Activated naive CD4-positive, alpha-beta T cell treated with anti-CD3 and anti-CD28 coated beads for 36 hours (primary cell): ENCODE measurements at regions of chr17 and their contacts with region 1.

Region 1: GRCh38 chr17:29124117-29124924 is 55.9 kb downstream of the MYO18A start:
- DNase-seq: peak; percentile 68
- H3K4me3 Mint-ChIP-seq: no peak overlapping the region
- H3K27ac Mint-ChIP-seq: no peak overlapping the region
- H3K4me1 Mint-ChIP-seq: peaks cover 2% of the 10 kb centered on the region
- H3K27me3 Mint-ChIP-seq: no peaks in the 10 kb centered on the region

Region 2: GRCh38 chr17:29140051-29140621 is 15.8 kb after region 1 on chr17:
- CTCF ChIA-PET with region 1: interaction called, 120 read pairs
- intact Hi-C with region 1: loop called (anchors 1 kb)
- DNase-seq: peak; percentile 89
- H3K4me3 Mint-ChIP-seq: peak overlapping the region; percentile 83
- H3K27ac Mint-ChIP-seq: peak overlapping the region; percentile 93
- H3K4me1 Mint-ChIP-seq: peaks cover 66% of the 10 kb centered on the region
- H3K27me3 Mint-ChIP-seq: no peaks in the 10 kb centered on the region

Region 3: GRCh38 chr17:29180034-29180787 is 55.9 kb after region 1 on chr17 and contains the start of gene MYO18A:
- CTCF ChIA-PET with region 1: interaction called, 56 read pairs
- intact Hi-C with region 1: loop called (anchors 1 kb)
- DNase-seq: peak; percentile 84
- H3K4me3 Mint-ChIP-seq: peak within 1 kb of the TSS; percentile 55
- H3K27ac Mint-ChIP-seq: no peak within 1 kb of the TSS
- H3K4me1 Mint-ChIP-seq: peaks cover 26% of the 10 kb centered on the region
- H3K27me3 Mint-ChIP-seq: no peaks in the 10 kb centered on the region
- total RNA-seq, gene MYO18A: 23.8 to 25.0 TPM